ENCODE measurements at regions of chr14 and their contacts with region 1.

Region 1: DNA sequence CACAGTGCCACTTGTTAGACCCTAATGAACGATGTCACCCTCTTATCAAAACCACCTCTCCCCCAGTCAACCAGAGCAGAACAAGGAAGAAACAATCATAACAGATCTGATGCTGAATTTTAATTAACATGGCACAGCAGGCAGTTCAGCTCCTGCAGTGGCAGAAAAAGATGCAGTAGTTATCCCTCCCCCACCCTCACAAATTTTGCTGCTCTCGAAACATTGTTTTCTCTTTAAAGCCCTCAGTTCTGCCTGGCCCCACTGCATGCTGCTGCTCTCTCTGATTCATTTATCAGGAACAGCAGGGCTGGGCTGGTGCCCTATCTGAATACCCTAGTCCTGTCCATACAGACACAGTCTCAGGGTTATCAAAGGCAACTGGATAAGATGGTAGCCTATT is 12.2 kb downstream of the CCDC175 start:
- DNase-seq: no peak
- ATAC-seq: no peak
- H3K4me3 ChIP-seq: no peak overlapping the region
- H3K27ac ChIP-seq: no peak overlapping the region
- H3K4me1 ChIP-seq: no peaks in the 10 kb centered on the region
- H3K27me3 ChIP-seq: peaks cover 11% of the 10 kb centered on the region
- CTCF ChIP-seq: no peak
- POLR2A ChIP-seq: no peak
- RAD21 ChIP-seq: no peak

Region 2: DNA sequence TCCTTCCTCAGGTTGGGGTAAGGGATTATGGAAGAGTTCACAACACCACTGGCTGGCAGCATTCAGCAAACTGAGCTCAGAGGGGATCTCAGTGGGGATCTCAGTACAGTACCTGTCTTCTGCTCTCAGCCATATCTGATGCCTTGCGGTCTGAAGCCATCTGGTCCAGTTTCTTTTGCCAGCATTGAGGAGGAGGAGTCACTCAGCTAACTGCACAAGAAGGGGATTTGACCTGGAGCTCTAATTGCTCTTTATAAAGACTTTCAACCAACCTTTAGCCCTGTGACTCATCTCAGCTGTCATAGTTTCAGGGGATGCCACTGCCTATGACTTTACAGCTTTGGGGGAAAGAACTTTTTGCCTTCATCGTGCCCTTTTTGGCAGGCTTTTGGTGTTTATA is 35.2 kb before region 1 on chr14:
- CTCF ChIA-PET with region 1: no interaction called
- POLR2A ChIA-PET with region 1: no interaction called
- dilution Hi-C with region 1: no loop called
- in situ Hi-C with region 1: no loop called
- intact Hi-C with region 1: loop called (anchors 5 kb)
- DNase-seq: no peak
- ATAC-seq: no peak
- H3K4me3 ChIP-seq: no peak overlapping the region
- H3K27ac ChIP-seq: no peak overlapping the region
- H3K4me1 ChIP-seq: peaks cover 3% of the 10 kb centered on the region
- H3K27me3 ChIP-seq: peaks cover 3% of the 10 kb centered on the region; the same call in 1 of the 2 replicates
- CTCF ChIP-seq: no peak
- POLR2A ChIP-seq: no peak
- RAD21 ChIP-seq: no peak

Region 3: DNA sequence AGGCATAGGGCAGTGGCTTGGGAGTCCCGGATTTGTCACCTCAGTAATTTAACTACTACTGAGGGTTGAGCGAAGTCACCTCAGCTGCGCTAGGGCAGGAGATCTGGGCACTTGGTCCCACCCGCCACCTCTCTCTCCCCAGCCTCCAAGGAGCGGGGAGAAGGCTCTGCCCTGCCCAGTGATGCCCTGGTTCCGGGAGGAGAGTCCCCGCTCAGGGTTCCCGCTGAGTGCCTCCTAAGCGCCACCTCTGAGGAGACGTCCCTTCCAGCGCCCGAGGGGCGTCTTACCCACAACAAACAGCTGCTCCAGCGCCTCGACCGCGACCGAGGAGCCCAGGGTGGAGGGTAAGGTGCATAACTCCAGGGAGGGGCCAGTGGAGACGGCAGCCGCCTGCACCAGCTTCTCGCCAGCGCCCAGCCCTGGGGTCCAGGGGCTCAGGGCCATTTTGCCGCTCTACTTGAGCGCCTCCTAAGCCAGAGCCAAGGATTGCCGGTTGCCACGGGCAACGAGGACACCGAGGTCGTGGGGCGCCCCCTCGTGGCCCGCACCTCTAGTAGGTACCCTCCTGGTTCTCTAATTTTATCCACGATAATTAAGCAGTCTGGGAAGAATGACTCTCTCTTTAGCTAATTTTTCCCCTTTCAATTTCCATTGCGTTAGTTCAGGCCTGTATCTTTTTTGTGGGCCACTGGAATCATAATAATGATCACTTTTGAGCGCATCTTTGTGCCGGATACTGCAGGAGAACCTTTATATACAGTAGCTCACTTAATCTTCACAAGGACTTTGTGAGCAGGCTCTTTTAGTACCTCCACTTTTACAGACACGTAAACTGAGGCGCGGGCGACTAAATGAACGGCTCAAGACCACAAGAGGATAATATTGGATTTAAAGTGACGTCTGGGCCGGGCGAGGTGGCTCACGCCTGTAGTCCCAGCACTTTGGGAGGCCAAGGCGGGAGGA is 12.2 kb after region 1 on chr14 and contains the start of gene CCDC175:
- CTCF ChIA-PET with region 1: interaction called, 12 read pairs
- POLR2A ChIA-PET with region 1: no interaction called
- dilution Hi-C with region 1: no loop called
- in situ Hi-C with region 1: no loop called
- intact Hi-C with region 1: no loop called
- DNase-seq: peak; percentile 71
- ATAC-seq: peak; percentile 98
- H3K4me3 ChIP-seq: peak within 1 kb of the TSS; percentile 37
- H3K27ac ChIP-seq: no peak within 1 kb of the TSS
- H3K4me1 ChIP-seq: no peaks in the 10 kb centered on the region
- H3K27me3 ChIP-seq: peaks cover 10% of the 10 kb centered on the region
- CTCF ChIP-seq: peak; percentile 88
- POLR2A ChIP-seq: no peak
- RAD21 ChIP-seq: peak; percentile 76
- total RNA-seq, gene CCDC175: not detected in 2 replicates